BJ (cell line): ENCODE measurements at regions of chr9 and their contacts with region 1.

Region 1: DNA sequence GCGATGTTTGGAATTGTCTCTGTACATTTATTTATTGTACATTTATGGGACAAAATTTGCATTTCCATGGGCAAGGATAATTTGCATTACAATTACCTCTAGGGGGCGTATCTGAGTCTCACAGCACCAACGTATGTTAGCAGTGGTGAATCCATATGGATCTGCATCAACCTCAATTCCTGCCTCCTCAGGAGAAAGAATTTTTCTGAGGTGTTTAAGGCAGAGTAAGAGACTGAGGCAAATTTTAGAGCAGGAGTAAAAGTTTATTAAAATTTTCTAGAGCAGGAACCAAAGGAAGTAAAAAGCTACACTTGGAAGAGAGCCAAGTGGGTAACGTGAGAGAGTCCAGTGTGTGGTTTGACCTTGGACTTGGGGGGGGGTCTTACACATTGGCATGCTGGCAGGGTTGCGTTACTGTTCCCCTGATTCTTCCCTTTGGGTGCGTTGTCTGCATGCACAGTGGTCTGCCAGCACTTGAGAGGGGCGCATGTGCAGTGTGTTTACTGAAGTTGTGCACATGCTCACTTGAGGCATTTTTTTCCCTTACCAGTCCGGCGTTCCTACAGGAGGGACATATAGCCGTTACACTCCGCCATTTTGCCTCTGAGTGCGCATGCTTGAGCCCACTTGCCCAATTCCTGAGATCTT is 21.0 kb upstream of the RAB14 start:
- DNase-seq: no peak
- H3K4me3 ChIP-seq: no peak overlapping the region
- H3K27me3 ChIP-seq: no peaks in the 10 kb centered on the region
- CTCF ChIP-seq: peak; percentile 72

Region 2: GRCh38 chr9:121098567-121099198 is 124.0 kb before region 1 on chr9:
- CTCF ChIA-PET with region 1: no interaction called
- POLR2A ChIA-PET with region 1: no interaction called
- DNase-seq: no peak
- H3K4me3 ChIP-seq: no peak overlapping the region
- H3K27me3 ChIP-seq: no peaks in the 10 kb centered on the region
- CTCF ChIP-seq: no peak

Region 3: DNA sequence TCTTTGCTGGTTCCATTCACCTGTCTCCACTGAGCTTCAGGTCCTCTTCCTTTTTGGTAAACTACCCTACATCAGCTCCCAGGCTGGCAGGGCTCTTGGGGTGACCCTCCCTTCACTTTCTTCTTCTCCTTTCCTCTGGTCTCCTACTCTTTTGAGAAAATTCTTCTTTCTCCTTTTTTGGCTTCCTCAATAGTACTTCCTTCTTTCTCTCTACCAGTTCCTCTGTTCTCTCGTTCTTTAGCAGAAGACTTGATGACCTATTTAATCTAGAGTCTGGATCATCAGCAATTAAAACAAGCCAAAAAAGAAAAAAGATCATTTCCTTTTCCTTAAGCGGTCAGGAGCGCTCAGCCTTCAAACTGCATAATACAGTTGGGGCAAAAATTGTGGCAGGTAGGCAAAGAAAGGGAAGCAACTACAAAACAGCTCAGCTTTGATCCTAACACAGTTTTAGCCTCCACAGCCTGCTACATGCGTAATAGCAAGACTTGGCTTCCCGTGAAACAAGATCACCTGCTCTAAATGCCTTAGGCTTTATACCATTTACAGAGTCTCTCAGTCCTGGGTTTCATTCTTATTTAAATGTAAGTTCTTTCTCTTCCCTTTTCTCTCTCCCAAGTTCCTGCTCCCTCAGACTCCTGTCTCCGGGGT is 31.3 kb after region 1 on chr9:
- CTCF ChIA-PET with region 1: no interaction called
- POLR2A ChIA-PET with region 1: no interaction called
- DNase-seq: no peak
- H3K4me3 ChIP-seq: no peak overlapping the region
- H3K27me3 ChIP-seq: no peaks in the 10 kb centered on the region
- CTCF ChIP-seq: no peak

Region 4: DNA sequence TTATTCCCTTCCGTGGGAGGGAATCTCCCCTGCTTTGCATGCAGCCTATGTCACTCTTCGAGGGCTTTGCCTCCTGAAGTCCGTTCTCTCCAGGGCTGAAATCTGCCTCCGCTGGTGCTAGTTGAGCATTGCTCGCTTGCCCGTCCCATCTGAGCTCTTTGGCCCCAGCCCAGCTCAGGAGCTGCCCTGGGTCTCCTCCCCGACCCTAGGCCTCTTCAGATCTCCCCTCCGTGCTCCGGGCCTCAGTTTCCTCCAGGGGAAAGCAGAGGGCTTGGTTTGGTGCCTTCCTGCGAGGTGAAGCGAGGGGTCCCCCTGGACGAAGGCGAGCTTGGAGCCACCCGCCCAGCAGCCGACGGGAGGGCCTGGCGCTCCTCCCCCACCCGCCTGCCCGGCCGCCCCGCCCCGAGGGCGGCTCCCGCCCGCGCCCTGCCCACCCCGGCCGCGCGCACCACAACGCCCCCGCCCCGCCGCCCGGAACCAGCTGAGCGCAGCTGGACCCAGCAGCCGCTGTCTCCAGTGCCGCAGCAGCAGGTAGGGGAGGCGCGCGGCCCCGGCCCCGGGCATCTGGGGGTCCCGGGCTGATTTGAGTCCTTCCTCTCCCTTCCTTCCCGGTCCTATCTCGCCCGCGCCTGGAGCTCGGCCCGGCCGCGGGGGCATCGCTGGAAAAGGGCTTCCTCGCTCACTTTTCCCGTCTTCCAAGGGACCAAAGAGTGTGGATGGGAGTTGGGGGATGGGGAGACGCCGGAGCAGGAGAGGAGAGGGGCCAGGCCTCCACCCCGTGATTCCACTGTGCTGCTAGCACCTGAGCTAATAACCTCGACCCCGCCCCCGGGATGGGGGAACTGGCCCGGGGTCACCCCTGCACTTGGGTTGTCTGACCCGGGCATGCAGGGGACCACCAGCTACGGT is 45.3 kb after region 1 on chr9 and contains the start of gene GSN:
- CTCF ChIA-PET with region 1: interaction called, 12 read pairs
- POLR2A ChIA-PET with region 1: no interaction called
- DNase-seq: no peak
- H3K4me3 ChIP-seq: peak within 1 kb of the TSS; percentile 89
- H3K27me3 ChIP-seq: no peaks in the 10 kb centered on the region
- CTCF ChIP-seq: peak; percentile 24; the same call in 1 of the 2 replicates
- polyA plus RNA-seq, gene GSN: 493 and 765 TPM in 2 replicates

Region 5: GRCh38 chr9:121299467-121300234 is 77.0 kb after region 1 on chr9:
- CTCF ChIA-PET with region 1: interaction called, 12 read pairs
- POLR2A ChIA-PET with region 1: no interaction called
- DNase-seq: no peak
- H3K4me3 ChIP-seq: peak overlapping the region; percentile 35
- H3K27me3 ChIP-seq: no peaks in the 10 kb centered on the region
- CTCF ChIP-seq: no peak

Region 6: DNA sequence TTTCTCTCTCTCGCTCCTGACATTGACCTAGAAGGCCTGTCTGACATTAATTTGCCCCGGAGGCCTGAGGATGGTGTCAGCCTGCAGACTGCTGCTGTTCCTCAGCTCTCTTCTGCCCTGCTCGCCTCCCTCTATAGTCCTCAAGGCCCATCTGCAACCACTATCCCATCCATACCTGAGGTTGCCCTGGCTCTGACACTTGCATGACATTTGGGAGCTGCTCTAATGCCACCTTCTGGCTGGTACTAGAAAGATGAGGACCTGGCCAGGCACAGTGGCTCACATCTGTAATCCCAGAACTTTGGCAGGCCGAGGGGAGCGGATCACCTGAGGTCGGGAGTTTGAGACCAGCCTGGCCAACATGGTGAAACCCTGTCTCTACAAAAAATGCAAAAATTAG is 315.6 kb after region 1 on chr9:
- CTCF ChIA-PET with region 1: no interaction called
- POLR2A ChIA-PET with region 1: no interaction called
- DNase-seq: no peak
- H3K4me3 ChIP-seq: no peak overlapping the region
- H3K27me3 ChIP-seq: peaks cover 6% of the 10 kb centered on the region; the same call in 1 of the 2 replicates
- CTCF ChIP-seq: no peak